ENCODE measurements at regions of chr9 and their contacts with region 1.

Region 1: DNA sequence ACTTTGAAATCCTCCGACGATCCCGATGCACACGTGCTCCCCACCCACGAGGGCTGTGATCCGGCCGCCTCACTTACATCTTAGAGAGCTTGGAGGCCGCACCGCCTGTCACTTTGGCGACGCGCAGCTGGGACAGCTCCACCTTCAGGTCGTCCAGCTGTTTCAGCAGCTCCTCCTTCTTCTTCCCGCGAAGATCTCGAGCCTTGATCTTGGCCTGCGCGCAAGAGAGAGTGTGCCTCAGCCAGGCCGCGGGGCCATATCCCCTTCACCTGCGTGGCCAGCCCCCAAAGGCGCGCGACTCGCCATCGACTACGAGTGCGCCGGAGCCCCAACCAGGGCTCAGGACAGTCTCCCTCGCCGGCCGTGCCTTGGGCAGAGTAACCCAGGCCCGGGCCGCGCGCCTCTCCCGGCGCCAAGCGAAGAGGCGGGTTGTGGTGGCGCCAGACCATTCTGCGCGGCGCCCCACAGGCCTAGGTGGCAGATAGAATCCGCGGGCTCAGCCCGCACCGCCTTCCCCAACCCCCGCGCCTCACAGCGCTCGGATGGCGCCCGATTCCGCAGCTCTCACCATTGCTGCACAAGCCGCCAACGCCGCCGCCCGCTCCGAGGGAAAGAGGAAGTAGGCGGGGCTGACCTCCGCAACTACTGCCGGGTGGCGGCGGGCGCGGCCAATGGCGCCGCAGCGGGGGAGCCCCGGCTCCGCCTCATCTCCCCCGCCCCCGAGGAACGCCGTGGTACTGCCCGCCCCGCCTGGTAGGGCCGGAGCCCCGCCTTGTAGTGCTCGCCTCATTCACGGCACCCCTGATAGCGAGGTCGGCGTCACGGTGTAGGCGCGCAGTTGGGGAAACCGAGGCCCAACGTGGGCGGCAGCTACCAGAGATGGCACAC is at the starts of genes ARPC5L and RPL35:
- DNase-seq: peak; percentile 93
- H3K4me3 Mint-ChIP-seq: peak within 1 kb of the TSS; percentile 81
- H3K27ac Mint-ChIP-seq: peak within 1 kb of the TSS; percentile 88
- H3K4me1 Mint-ChIP-seq: peaks cover 22% of the 10 kb centered on the region
- H3K27me3 Mint-ChIP-seq: no peaks in the 10 kb centered on the region
- CTCF ChIP-seq: no peak
- total RNA-seq, gene ARPC5L: 72.5 and 84.2 TPM in 2 replicates
- total RNA-seq, gene RPL35: 1,966 and 2,009 TPM in 2 replicates

Region 2: DNA sequence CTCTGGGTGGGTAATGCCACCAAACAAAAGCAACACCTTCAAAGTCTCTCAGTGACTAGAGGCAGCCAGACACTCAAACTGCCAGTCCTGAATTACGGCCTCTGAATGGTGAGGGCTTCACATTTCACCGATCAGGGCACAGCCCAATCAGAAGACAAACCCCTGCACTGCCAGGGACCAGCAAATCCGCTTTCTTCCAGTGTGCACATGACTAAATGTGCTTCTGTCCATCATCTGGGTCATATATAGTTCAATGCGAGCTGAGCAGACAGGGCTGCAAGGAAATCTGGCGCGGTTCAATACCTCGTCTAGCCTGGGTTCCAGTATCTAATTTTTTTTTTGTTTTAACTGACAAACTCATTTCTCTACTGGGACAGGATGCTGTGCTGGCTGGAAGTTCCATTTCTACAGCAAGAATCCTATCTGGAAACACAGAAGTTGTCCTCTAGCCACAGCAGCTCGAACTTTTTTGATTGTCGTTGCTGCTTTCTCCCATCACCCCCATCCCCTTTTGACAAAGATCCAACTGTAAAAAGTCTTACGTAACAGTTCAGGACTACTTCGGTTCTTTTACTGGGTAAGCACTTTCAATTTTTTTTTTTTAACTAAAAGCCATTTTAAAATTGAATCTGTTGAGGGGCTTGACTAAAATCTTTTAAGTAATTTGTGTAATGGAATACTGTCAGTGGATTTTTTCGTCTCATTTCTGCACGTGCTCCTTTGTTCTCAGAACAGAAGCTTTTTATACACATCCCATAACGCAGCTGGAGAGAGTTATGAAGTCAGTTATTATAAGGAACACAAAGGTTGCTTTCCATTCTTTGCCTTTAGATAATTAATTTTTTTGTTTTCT is 203.2 kb before region 1 on chr9:
- CTCF ChIA-PET with region 1: interaction called, 3 read pairs
- POLR2A ChIA-PET with region 1: interaction called, 25 read pairs
- intact Hi-C with region 1: no loop called
- DNase-seq: peak; percentile 98
- H3K4me3 Mint-ChIP-seq: peak overlapping the region; percentile 98
- H3K27ac Mint-ChIP-seq: peak overlapping the region; percentile 96
- H3K4me1 Mint-ChIP-seq: peaks cover 20% of the 10 kb centered on the region
- H3K27me3 Mint-ChIP-seq: no peaks in the 10 kb centered on the region
- CTCF ChIP-seq: no peak

Region 3: GRCh38 chr9:124764774-124765438 is 96.7 kb before region 1 on chr9:
- CTCF ChIA-PET with region 1: interaction called, 927 read pairs
- POLR2A ChIA-PET with region 1: interaction called, 299 read pairs
- intact Hi-C with region 1: no loop called
- DNase-seq: peak; percentile 35
- H3K4me3 Mint-ChIP-seq: no peak overlapping the region
- H3K27ac Mint-ChIP-seq: no peak overlapping the region
- H3K4me1 Mint-ChIP-seq: peaks cover 11% of the 10 kb centered on the region
- H3K27me3 Mint-ChIP-seq: no peaks in the 10 kb centered on the region
- CTCF ChIP-seq: peak; percentile 37

Region 4: GRCh38 chr9:124839612-124840299 is 21.8 kb before region 1 on chr9:
- CTCF ChIA-PET with region 1: interaction called, 159 read pairs
- POLR2A ChIA-PET with region 1: interaction called, 28 read pairs
- intact Hi-C with region 1: no loop called
- DNase-seq: no peak
- H3K4me3 Mint-ChIP-seq: no peak overlapping the region
- H3K27ac Mint-ChIP-seq: no peak overlapping the region
- H3K4me1 Mint-ChIP-seq: peaks cover 11% of the 10 kb centered on the region
- H3K27me3 Mint-ChIP-seq: no peaks in the 10 kb centered on the region
- CTCF ChIP-seq: peak; percentile 27

Region 5: GRCh38 chr9:124894741-124895170 is 33.2 kb after region 1 on chr9:
- CTCF ChIA-PET with region 1: interaction called, 16 read pairs
- POLR2A ChIA-PET with region 1: interaction called, 10 read pairs
- intact Hi-C with region 1: no loop called
- DNase-seq: peak; percentile 54
- H3K4me3 Mint-ChIP-seq: no peak overlapping the region
- H3K27ac Mint-ChIP-seq: peak overlapping the region; percentile 74
- H3K4me1 Mint-ChIP-seq: peaks cover 5% of the 10 kb centered on the region
- H3K27me3 Mint-ChIP-seq: no peaks in the 10 kb centered on the region
- CTCF ChIP-seq: peak; percentile 47

Region 6: GRCh38 chr9:124914753-124915405 is 53.3 kb after region 1 on chr9:
- CTCF ChIA-PET with region 1: no interaction called
- POLR2A ChIA-PET with region 1: no interaction called
- intact Hi-C with region 1: no loop called
- DNase-seq: no peak
- H3K4me3 Mint-ChIP-seq: no peak overlapping the region
- H3K27ac Mint-ChIP-seq: peak overlapping the region; percentile 47
- H3K4me1 Mint-ChIP-seq: no peaks in the 10 kb centered on the region
- H3K27me3 Mint-ChIP-seq: no peaks in the 10 kb centered on the region
- CTCF ChIP-seq: no peak

Region 7: DNA sequence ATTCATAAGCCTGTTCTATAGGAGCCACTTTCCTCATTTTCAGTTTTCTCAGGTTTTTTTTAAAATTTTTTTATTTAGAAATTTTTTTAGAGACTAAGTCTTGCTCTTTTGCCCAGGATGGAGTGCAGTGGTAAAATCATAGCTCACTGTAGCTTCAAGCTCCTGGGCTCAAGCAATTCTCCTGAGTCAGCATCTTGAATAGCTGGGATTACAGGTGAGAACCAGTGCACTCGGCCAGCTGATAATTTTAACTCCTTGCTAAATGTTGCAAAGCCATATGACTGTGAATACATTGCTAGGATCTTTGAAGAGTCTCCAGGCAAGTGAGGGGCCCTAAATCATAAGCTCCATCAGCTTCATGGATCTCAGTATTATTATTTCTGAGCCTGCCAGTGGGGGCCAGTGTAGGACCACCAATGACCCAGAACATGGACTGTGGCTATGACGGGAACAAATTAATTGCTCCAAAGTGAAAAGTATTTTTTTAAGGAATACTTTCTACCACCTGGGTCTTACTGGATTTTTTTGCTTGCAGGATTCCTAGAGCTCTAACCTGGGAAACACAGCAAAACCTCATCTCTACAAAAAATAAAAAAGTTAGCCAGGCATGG is 394.3 kb after region 1 on chr9:
- CTCF ChIA-PET with region 1: no interaction called
- POLR2A ChIA-PET with region 1: no interaction called
- intact Hi-C with region 1: no loop called
- DNase-seq: peak; percentile 37
- H3K4me3 Mint-ChIP-seq: no peak overlapping the region
- H3K27ac Mint-ChIP-seq: no peak overlapping the region
- H3K4me1 Mint-ChIP-seq: peaks cover 3% of the 10 kb centered on the region
- H3K27me3 Mint-ChIP-seq: no peaks in the 10 kb centered on the region
- CTCF ChIP-seq: peak; percentile 23

Region 8: DNA sequence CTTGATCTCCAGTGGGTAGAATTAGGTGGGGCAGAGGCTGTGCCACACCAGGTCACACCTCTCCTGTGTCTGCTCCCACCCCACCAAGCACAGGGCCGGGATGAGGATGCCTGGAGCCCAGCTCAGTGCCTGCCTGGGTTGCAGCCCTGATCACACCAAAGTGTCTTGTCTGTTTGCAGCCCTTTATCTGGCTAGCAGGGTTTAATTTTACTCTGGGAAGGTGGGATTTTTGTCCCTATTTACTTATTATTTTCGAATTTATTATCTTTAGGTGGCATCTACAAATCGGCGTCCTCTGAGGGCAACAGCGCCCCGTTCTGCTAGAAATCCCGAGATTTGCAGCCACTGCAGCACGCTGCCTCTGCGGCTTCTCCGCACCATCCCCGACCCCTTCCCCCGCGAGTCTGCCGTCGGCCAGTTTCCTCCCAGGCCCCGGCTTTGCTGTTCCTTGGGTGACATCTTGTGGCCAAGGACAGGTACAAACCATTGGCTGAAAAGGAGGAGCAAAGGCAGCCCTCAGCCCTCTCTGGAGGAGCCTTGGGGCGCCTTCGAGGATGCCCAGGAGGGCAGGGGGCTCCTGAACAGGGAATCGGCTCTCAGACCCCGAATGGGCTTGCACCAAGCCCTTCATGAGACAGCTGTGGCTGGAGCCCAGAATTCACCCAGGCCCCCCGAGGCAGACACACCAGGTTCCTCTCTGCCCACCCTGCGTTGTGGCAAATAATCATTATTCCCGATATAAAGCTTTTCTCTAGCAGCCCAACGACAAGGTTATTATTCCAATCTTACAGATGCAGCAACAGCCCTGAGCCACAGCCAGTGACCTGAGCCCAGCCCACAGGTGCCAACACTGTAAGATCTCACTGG is 513.1 kb after region 1 on chr9:
- CTCF ChIA-PET with region 1: no interaction called
- POLR2A ChIA-PET with region 1: no interaction called
- intact Hi-C with region 1: loop called (anchors 5 kb)
- DNase-seq: peak; percentile 83
- H3K4me3 Mint-ChIP-seq: peak overlapping the region; percentile 56
- H3K27ac Mint-ChIP-seq: no peak overlapping the region
- H3K4me1 Mint-ChIP-seq: peaks cover 12% of the 10 kb centered on the region
- H3K27me3 Mint-ChIP-seq: no peaks in the 10 kb centered on the region
- CTCF ChIP-seq: peak; percentile 82